Activated CD4-positive, alpha-beta memory T cell treated with anti-CD3 and anti-CD28 coated beads for 36 hours (primary cell): ENCODE measurements at regions of chr6 and their contacts with region 1.

Region 1: GRCh38 chr6:116100419-116101301 is at the start of gene NT5DC1:
- DNase-seq: peak; percentile 90
- H3K4me3 Mint-ChIP-seq: peak within 1 kb of the TSS; percentile 89
- H3K27ac Mint-ChIP-seq: peak within 1 kb of the TSS; percentile 82
- H3K4me1 Mint-ChIP-seq: peaks cover 47% of the 10 kb centered on the region
- H3K27me3 Mint-ChIP-seq: no peaks in the 10 kb centered on the region
- total RNA-seq, gene NT5DC1: 51.1 to 51.3 TPM

Region 2: GRCh38 chr6:115896538-115897129 is 204.0 kb before region 1 on chr6:
- CTCF ChIA-PET with region 1: no interaction called
- POLR2A ChIA-PET with region 1: no interaction called
- intact Hi-C with region 1: loop called (anchors 5 kb)
- DNase-seq: no peak
- H3K4me3 Mint-ChIP-seq: no peak overlapping the region
- H3K27ac Mint-ChIP-seq: no peak overlapping the region
- H3K4me1 Mint-ChIP-seq: no peaks in the 10 kb centered on the region
- H3K27me3 Mint-ChIP-seq: peaks cover 1% of the 10 kb centered on the region

Region 3: GRCh38 chr6:115986026-115986425 is 114.6 kb before region 1 on chr6:
- CTCF ChIA-PET with region 1: no interaction called
- POLR2A ChIA-PET with region 1: no interaction called
- intact Hi-C with region 1: no loop called
- DNase-seq: no peak
- H3K4me3 Mint-ChIP-seq: no peak overlapping the region
- H3K27ac Mint-ChIP-seq: no peak overlapping the region
- H3K4me1 Mint-ChIP-seq: no peaks in the 10 kb centered on the region
- H3K27me3 Mint-ChIP-seq: peaks cover 5% of the 10 kb centered on the region

Region 4: GRCh38 chr6:116010790-116011401 is 89.8 kb before region 1 on chr6:
- CTCF ChIA-PET with region 1: interaction called, 36 read pairs
- POLR2A ChIA-PET with region 1: interaction called, 4 read pairs
- intact Hi-C with region 1: loop called (anchors 1 kb)
- DNase-seq: peak; percentile 65
- H3K4me3 Mint-ChIP-seq: no peak overlapping the region
- H3K27ac Mint-ChIP-seq: no peak overlapping the region
- H3K4me1 Mint-ChIP-seq: peaks cover 13% of the 10 kb centered on the region
- H3K27me3 Mint-ChIP-seq: peaks cover 7% of the 10 kb centered on the region

Region 5: GRCh38 chr6:116060572-116061283 is 39.9 kb before region 1 on chr6 and contains the start of gene FRK:
- CTCF ChIA-PET with region 1: no interaction called
- POLR2A ChIA-PET with region 1: no interaction called
- intact Hi-C with region 1: no loop called
- DNase-seq: no peak
- H3K4me3 Mint-ChIP-seq: no peak within 1 kb of the TSS
- H3K27ac Mint-ChIP-seq: no peak within 1 kb of the TSS
- H3K4me1 Mint-ChIP-seq: no peaks in the 10 kb centered on the region
- H3K27me3 Mint-ChIP-seq: peaks cover 4% of the 10 kb centered on the region
- total RNA-seq, gene FRK: 0.02 TPM

Region 6: DNA sequence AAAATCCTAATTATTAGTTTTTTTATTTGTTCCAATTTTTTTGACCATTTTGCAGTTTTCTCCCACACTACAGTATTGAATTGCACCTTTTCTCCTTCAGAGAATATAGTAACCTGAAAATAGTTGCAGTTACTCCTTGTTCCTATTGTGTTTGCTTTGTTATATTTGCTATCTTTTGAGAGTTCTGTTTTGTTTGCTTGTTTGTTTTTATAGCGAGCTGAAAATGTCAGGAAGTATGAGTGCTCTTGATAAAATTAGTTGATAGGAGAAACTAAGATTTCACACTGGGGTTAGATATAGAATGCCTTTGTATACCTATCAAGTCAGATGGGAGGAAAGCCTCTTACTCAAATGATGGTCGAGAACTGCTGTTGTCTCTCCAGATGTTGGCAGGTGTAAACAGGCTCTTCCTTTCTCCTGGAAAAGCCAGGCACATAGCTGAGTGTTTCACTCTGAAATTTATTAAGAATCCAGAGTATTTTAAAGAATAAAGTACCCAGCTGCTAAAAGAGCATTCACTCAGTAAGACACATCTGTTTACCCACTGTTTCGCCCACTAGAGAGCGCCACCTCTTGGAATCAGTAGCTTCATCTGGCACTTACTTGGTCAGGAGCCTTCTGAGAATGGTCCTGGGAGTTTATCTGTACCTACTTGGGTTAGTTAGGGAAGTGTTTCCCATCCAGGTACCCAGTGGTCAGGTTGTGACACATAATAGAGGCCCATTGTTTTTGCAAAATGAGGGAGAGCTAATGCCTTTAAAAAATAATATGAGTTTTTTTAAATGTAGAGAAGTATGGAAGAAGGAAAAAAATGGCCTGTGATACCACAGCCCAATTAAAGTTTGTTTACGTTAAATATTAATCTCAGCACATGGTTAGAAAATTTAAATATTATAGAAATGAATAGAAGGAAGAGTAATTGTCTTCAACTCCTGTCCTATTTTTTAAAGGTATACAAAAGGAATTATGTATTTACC is 11.2 kb after region 1 on chr6:
- CTCF ChIA-PET with region 1: interaction called, 12 read pairs
- POLR2A ChIA-PET with region 1: interaction called, 4 read pairs
- intact Hi-C with region 1: no loop called
- DNase-seq: peak; percentile 47
- H3K4me3 Mint-ChIP-seq: no peak overlapping the region
- H3K27ac Mint-ChIP-seq: no peak overlapping the region
- H3K4me1 Mint-ChIP-seq: peaks cover 2% of the 10 kb centered on the region
- H3K27me3 Mint-ChIP-seq: no peaks in the 10 kb centered on the region

Region 7: GRCh38 chr6:116165596-116165995 is 64.9 kb after region 1 on chr6:
- CTCF ChIA-PET with region 1: no interaction called
- POLR2A ChIA-PET with region 1: no interaction called
- intact Hi-C with region 1: no loop called
- DNase-seq: no peak
- H3K4me3 Mint-ChIP-seq: no peak overlapping the region
- H3K27ac Mint-ChIP-seq: no peak overlapping the region
- H3K4me1 Mint-ChIP-seq: no peaks in the 10 kb centered on the region
- H3K27me3 Mint-ChIP-seq: no peaks in the 10 kb centered on the region

Region 8: GRCh38 chr6:116253505-116254296 is 153.0 kb after region 1 on chr6 and contains the start of gene TSPYL4:
- CTCF ChIA-PET with region 1: no interaction called
- POLR2A ChIA-PET with region 1: no interaction called
- intact Hi-C with region 1: loop called (anchors 1 kb)
- DNase-seq: peak; percentile 95
- H3K4me3 Mint-ChIP-seq: no peak within 1 kb of the TSS
- H3K27ac Mint-ChIP-seq: no peak within 1 kb of the TSS
- H3K4me1 Mint-ChIP-seq: peaks cover 8% of the 10 kb centered on the region
- H3K27me3 Mint-ChIP-seq: no peaks in the 10 kb centered on the region
- total RNA-seq, gene TSPYL4: 10.5 to 11.1 TPM

Region 9: GRCh38 chr6:116398316-116399010 is 297.8 kb after region 1 on chr6:
- CTCF ChIA-PET with region 1: no interaction called
- POLR2A ChIA-PET with region 1: no interaction called
- intact Hi-C with region 1: no loop called
- DNase-seq: no peak
- H3K4me3 Mint-ChIP-seq: no peak overlapping the region
- H3K27ac Mint-ChIP-seq: no peak overlapping the region
- H3K4me1 Mint-ChIP-seq: peaks cover 2% of the 10 kb centered on the region
- H3K27me3 Mint-ChIP-seq: no peaks in the 10 kb centered on the region

Region 10: GRCh38 chr6:116680975-116681808 is 580.5 kb after region 1 on chr6 and contains the start of gene KPNA5:
- CTCF ChIA-PET with region 1: no interaction called
- POLR2A ChIA-PET with region 1: interaction called, 3 read pairs
- intact Hi-C with region 1: loop called (anchors 5 kb)
- DNase-seq: peak; percentile 95
- H3K4me3 Mint-ChIP-seq: peak within 1 kb of the TSS; percentile 99
- H3K27ac Mint-ChIP-seq: peak within 1 kb of the TSS; percentile 96
- H3K4me1 Mint-ChIP-seq: peaks cover 41% of the 10 kb centered on the region
- H3K27me3 Mint-ChIP-seq: no peaks in the 10 kb centered on the region
- total RNA-seq, gene KPNA5: 10.0 to 10.2 TPM

Region 11: DNA sequence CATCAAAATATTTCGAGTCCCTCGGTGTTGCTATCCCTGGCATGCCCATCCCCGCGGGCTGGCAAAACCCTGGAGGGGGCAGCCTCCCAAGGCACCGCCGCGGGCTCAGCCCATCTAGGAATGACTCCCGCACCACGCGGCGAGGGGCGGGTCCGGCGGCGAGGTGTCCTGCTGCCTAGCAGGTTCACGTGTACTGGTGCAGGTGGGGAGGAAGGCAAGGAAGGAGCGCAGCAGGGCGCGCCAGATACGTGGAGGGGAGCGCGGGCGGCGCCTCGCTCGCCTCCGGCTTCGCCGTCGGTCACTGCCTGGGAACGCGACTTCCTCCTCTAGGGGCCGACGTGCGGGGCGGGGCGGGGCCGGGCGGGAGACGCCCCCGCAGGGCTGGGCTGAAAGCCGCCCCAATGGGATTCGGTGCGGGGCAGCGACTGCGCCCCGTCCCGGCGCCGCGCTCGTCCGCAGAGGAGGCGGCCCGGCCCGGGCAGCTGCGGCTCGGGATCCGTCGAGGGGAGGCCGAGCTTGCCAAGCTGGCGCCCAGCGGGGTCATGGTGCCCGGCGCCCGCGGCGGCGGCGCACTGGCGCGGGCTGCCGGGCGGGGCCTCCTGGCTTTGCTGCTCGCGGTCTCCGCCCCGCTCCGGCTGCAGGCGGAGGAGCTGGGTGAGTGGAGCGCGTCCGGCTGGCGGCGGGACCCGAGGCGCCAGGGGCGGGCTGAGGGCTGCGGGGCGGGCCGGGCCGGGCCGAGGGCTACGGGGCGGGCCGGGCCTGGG is 1381.8 kb after region 1 on chr6 and contains the start of gene DCBLD1:
- CTCF ChIA-PET with region 1: no interaction called
- POLR2A ChIA-PET with region 1: no interaction called
- intact Hi-C with region 1: loop called (anchors 5 kb)
- DNase-seq: peak; percentile 74
- H3K4me3 Mint-ChIP-seq: peak within 1 kb of the TSS; percentile 82
- H3K27ac Mint-ChIP-seq: no peak within 1 kb of the TSS
- H3K4me1 Mint-ChIP-seq: peaks cover 12% of the 10 kb centered on the region
- H3K27me3 Mint-ChIP-seq: peaks cover 23% of the 10 kb centered on the region
- total RNA-seq, gene DCBLD1: 4.4 to 4.5 TPM